Activated CD8-positive, alpha-beta memory T cell treated with anti-CD3 and anti-CD28 coated beads, Interleukin-2, amount 10 ng/mL, durations not matched to agents 7 days and 5 days (primary cell): ENCODE measurements at regions of chr9 and their contacts with region 1.

Region 1: GRCh38 chr9:136944519-136945279 is at the starts of genes C8G and FBXW5:
- DNase-seq: peak; percentile 96
- ATAC-seq: peak; percentile 81
- H3K4me3 Mint-ChIP-seq: peak within 1 kb of the TSS; percentile 79
- H3K27ac Mint-ChIP-seq: peak within 1 kb of the TSS; percentile 81
- H3K4me1 Mint-ChIP-seq: peaks cover 18% of the 10 kb centered on the region
- H3K27me3 Mint-ChIP-seq: no peaks in the 10 kb centered on the region
- total RNA-seq, gene C8G: 1.7 TPM in 1 of 2 experiments, not detected in the other
- total RNA-seq, gene FBXW5: 106 to 107 TPM

Region 2: DNA sequence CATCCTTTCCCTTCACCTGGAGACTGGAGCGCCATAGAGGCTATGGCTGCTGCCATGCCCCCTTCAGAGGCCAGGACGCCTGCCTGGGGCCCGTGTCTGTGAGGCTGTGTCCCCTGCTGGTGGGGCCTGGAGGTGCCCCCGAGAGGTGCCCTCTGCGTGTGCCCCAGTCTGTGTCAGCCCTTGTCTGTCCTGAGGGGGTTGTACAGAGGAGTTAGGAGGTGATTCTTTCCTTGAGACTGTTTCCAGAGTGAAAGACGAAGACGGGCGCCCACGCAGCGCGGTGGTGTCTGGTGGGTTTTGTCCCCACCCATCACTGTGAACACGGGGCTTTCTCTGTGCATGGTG is 33.8 kb before region 1 on chr9:
- CTCF ChIA-PET with region 1: no interaction called
- DNase-seq: no peak
- ATAC-seq: no peak
- H3K4me3 Mint-ChIP-seq: no peak overlapping the region
- H3K27ac Mint-ChIP-seq: peak overlapping the region; percentile 46
- H3K4me1 Mint-ChIP-seq: peaks cover 8% of the 10 kb centered on the region
- H3K27me3 Mint-ChIP-seq: no peaks in the 10 kb centered on the region

Region 3: GRCh38 chr9:136934247-136934646 is 10.5 kb before region 1 on chr9:
- CTCF ChIA-PET with region 1: no interaction called
- DNase-seq: no peak
- ATAC-seq: no peak
- H3K4me3 Mint-ChIP-seq: no peak overlapping the region
- H3K27ac Mint-ChIP-seq: no peak overlapping the region
- H3K4me1 Mint-ChIP-seq: peaks cover 7% of the 10 kb centered on the region
- H3K27me3 Mint-ChIP-seq: no peaks in the 10 kb centered on the region

Region 4: DNA sequence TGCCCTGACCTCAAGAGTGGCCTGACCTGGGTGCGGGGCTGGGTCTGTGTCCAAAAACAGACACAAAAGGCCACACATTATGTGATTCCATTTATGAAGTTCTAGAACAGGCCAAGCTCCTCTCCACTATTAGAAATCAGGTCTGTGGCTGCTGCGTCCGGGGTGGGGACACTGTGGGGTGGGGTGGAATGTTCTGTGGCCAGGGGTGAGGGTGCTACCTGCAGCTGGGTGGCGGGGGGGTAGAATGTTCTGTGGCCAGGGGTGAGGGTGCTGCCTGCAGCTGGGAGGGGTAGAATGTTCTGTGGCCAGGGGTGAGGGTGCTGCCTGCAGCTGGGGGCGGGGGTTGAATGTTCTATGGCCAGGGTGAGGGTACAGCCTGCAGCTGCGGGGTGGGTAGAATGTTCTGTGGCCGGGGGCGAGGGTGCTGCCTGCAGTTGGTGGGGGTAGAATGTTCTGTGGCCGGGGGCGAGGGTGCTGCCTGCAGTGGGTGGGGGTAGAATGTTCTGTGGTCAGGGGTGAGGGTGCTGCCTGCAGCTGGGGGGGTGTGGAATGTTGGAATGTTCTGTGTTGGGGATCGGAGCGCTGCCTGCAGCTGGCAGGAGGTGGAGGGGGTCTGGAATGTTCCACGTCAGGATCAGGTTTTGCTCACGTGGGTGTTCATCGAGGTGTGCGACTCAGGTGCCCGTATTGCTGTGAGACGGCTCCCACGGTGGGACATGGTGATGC is 15.7 kb after region 1 on chr9:
- CTCF ChIA-PET with region 1: interaction called, 16 read pairs
- DNase-seq: peak; percentile 70
- ATAC-seq: no peak
- H3K4me3 Mint-ChIP-seq: no peak overlapping the region
- H3K27ac Mint-ChIP-seq: peak overlapping the region; percentile 84
- H3K4me1 Mint-ChIP-seq: peaks cover 35% of the 10 kb centered on the region
- H3K27me3 Mint-ChIP-seq: no peaks in the 10 kb centered on the region

Region 5: DNA sequence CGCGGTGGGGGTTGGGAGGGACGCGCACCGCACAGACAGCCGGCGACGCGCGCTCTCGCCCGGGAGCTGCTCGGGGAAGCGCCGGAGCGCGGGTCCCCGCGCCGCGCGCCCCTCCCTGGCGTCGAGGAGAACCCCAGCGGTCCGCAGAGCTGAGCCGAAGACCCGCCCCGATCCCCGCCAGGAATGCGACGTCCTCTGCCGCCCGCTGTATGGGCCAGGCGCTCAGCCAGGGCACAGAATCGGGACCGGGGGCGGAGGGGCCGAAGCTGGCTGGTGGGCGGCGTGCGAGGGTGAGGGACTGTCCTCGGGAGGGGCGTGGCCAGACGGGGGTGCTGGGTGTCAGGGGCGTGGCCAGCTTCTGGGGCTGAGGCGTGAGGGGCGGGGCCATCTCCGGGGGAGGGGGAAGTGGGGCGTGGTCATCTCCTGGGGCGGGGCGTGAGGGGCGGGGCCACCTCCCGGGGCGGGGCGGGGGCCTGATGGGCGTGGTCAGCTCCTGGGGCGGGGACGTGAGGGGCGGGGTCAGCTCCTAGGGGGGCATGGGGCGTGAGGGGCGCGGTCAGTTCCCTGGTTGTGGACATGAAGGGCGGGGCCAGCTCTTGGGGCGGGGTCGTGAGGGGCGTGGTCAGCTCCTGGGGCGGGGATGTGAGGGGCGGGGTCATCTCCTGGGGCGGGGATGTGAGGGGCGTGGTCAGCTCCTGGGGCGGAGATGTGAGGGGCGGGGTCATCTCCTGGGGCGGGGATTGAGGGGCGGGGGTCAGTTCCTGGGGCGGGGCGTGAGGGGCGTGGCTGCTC is 33.6 kb after region 1 on chr9:
- CTCF ChIA-PET with region 1: interaction called, 17 read pairs
- DNase-seq: peak; percentile 83
- ATAC-seq: peak; percentile 63
- H3K4me3 Mint-ChIP-seq: no peak overlapping the region
- H3K27ac Mint-ChIP-seq: no peak overlapping the region
- H3K4me1 Mint-ChIP-seq: peaks cover 15% of the 10 kb centered on the region
- H3K27me3 Mint-ChIP-seq: peaks cover 5% of the 10 kb centered on the region

Region 6: GRCh38 chr9:137000177-137000883 is 55.6 kb after region 1 on chr9:
- CTCF ChIA-PET with region 1: interaction called, 25 read pairs
- DNase-seq: peak; percentile 74
- ATAC-seq: peak; percentile 66
- H3K4me3 Mint-ChIP-seq: peak overlapping the region; percentile 59
- H3K27ac Mint-ChIP-seq: peak overlapping the region; percentile 86
- H3K4me1 Mint-ChIP-seq: peaks cover 60% of the 10 kb centered on the region
- H3K27me3 Mint-ChIP-seq: peaks cover 5% of the 10 kb centered on the region